HAP-1 (cell line): ENCODE measurements at regions of chr4 and their contacts with region 1.

Region 1: GRCh38 chr4:73019462-73020047 is 50.0 kb downstream of the COX18 start:
- DNase-seq: peak; percentile 33 to 58
- H3K4me3 ChIP-seq: no peak overlapping the region
- H3K4me1 ChIP-seq: no peaks in the 10 kb centered on the region
- H3K27me3 ChIP-seq: no peaks in the 10 kb centered on the region

Region 2: GRCh38 chr4:72302981-72303704 is 716.4 kb before region 1 on chr4:
- in situ Hi-C with region 1: loop called (anchors 25 kb)
- DNase-seq: peak; percentile 37 to 69
- H3K4me3 ChIP-seq: no peak overlapping the region
- H3K4me1 ChIP-seq: no peaks in the 10 kb centered on the region; the same call in 1 of the 2 replicates
- H3K27me3 ChIP-seq: no peaks in the 10 kb centered on the region

Region 3: GRCh38 chr4:72505314-72505744 is 514.2 kb before region 1 on chr4:
- in situ Hi-C with region 1: loop called (anchors 25 kb)
- DNase-seq: peak; percentile 55 to 56
- H3K4me3 ChIP-seq: no peak overlapping the region
- H3K4me1 ChIP-seq: no peaks in the 10 kb centered on the region
- H3K27me3 ChIP-seq: no peaks in the 10 kb centered on the region

Region 4: GRCh38 chr4:73139991-73140390 is 120.4 kb after region 1 on chr4:
- in situ Hi-C with region 1: no loop called
- DNase-seq: no peak
- H3K4me3 ChIP-seq: no peak overlapping the region
- H3K4me1 ChIP-seq: no peaks in the 10 kb centered on the region
- H3K27me3 ChIP-seq: no peaks in the 10 kb centered on the region